SK-N-SH (cell line): ENCODE measurements at regions of chr3 and their contacts with region 1.

Region 1: GRCh38 chr3:31550452-31551251 is 17.9 kb downstream of the STT3B start:
- DNase-seq: peak; percentile 43
- H3K4me3 ChIP-seq: no peak overlapping the region
- H3K27ac ChIP-seq: no peak overlapping the region; a peak in 1 of 4 replicates
- H3K4me1 ChIP-seq: peaks cover 0 to 3% of the 10 kb centered on the region in 2 experiments; a peak in 2 of 4 replicates
- H3K27me3 ChIP-seq: no peaks in the 10 kb centered on the region
- CTCF ChIP-seq: peak; percentile 78
- EP300 ChIP-seq: no peak
- RAD21 ChIP-seq: peak; percentile 70

Region 2: DNA sequence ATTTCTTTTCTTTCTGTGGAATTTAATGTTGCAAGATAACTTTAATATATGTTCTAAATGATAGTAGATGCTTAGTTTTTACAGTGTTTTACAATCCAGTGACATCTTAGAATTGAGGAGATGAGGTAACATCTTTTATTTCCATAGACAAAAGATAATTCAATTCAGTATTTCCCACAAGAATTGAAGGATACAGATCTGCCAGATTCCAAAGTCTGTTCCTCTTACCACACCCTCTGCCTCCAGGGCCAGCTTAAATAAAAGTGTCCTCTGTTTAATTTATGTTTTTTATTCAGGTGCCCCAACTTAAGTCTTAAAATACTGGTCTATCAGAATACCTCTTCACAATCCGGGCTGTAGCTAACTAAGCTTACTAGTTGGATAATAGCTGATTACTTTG is 11.4 kb before region 1 on chr3:
- CTCF ChIA-PET with region 1: interaction called, 12 read pairs
- POLR2A ChIA-PET with region 1: no interaction called
- DNase-seq: no peak
- H3K4me3 ChIP-seq: no peak overlapping the region
- H3K27ac ChIP-seq: no peak overlapping the region
- H3K4me1 ChIP-seq: peaks cover 0 to 6% of the 10 kb centered on the region in 2 experiments; a peak in 1 of 4 replicates
- H3K27me3 ChIP-seq: no peaks in the 10 kb centered on the region
- CTCF ChIP-seq: no peak
- EP300 ChIP-seq: no peak
- RAD21 ChIP-seq: no peak

Region 3: GRCh38 chr3:31661993-31662686 is 111.5 kb after region 1 on chr3:
- CTCF ChIA-PET with region 1: no interaction called
- POLR2A ChIA-PET with region 1: no interaction called
- DNase-seq: no peak
- H3K4me3 ChIP-seq: no peak overlapping the region
- H3K27ac ChIP-seq: no peak overlapping the region
- H3K4me1 ChIP-seq: no peaks in the 10 kb centered on the region
- H3K27me3 ChIP-seq: no peaks in the 10 kb centered on the region
- CTCF ChIP-seq: no peak
- EP300 ChIP-seq: no peak
- RAD21 ChIP-seq: no peak

Region 4: GRCh38 chr3:31738412-31738811 is 187.8 kb after region 1 on chr3:
- CTCF ChIA-PET with region 1: no interaction called
- POLR2A ChIA-PET with region 1: no interaction called
- DNase-seq: no peak
- H3K4me3 ChIP-seq: no peak overlapping the region
- H3K27ac ChIP-seq: no peak overlapping the region
- H3K4me1 ChIP-seq: no peaks in the 10 kb centered on the region; a peak in 2 of 4 replicates
- H3K27me3 ChIP-seq: no peaks in the 10 kb centered on the region
- CTCF ChIP-seq: no peak
- EP300 ChIP-seq: no peak
- RAD21 ChIP-seq: no peak

Region 5: GRCh38 chr3:31831598-31831997 is 280.9 kb after region 1 on chr3:
- CTCF ChIA-PET with region 1: no interaction called
- POLR2A ChIA-PET with region 1: no interaction called
- DNase-seq: peak; percentile 23
- H3K4me3 ChIP-seq: no peak overlapping the region
- H3K27ac ChIP-seq: no peak overlapping the region
- H3K4me1 ChIP-seq: peaks cover 0 to 3% of the 10 kb centered on the region in 2 experiments; a peak in 2 of 4 replicates
- H3K27me3 ChIP-seq: no peaks in the 10 kb centered on the region
- CTCF ChIP-seq: no peak
- EP300 ChIP-seq: no peak
- RAD21 ChIP-seq: no peak